PC-9 (cell line): ENCODE measurements at regions of chr12 and their contacts with region 1.

Region 1: GRCh38 chr12:67943226-67943892 is 45.9 kb upstream of the IFNG-AS1 start:
- DNase-seq: peak; percentile 50 to 52
- H3K4me3 ChIP-seq: no peak overlapping the region
- H3K27ac ChIP-seq: no peak overlapping the region
- H3K4me1 ChIP-seq: peaks cover 41% of the 10 kb centered on the region
- H3K27me3 ChIP-seq: no peaks in the 10 kb centered on the region
- CTCF ChIP-seq: peak; percentile 83

Region 2: DNA sequence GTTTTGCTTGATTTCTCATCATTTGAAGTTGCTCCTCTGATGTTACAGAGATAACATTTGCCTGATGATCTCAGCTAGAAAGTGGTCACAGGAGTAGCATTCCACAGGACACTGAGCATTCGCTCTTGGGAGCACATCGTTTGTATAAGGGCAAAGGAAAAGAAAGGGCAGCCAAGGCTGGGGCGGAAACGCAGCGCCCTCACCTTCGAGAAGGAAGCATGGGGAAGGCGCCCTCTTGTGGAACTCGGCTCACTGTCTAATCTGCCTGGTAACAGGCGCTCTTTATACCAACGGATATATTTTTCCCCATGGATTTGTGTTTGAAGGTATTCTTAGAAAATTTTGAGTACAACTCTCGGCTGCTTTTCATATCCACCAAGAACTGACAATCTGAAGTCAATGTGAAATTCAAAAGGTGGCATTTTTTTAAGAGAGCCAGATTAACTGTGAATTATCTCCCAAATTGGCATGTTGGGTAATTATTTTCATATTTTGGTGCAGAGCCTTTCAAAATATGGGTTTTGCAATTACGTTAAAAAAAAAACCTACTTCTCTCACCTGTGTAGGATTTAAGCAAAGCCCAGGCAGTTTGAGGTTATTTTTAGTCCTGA is 501.5 kb before region 1 on chr12:
- CTCF ChIA-PET with region 1: no interaction called
- POLR2A ChIA-PET with region 1: no interaction called
- intact Hi-C with region 1: loop called (anchors 5 kb)
- DNase-seq: peak in 1 of 2 experiments; percentile 77
- H3K4me3 ChIP-seq: no peak overlapping the region
- H3K27ac ChIP-seq: no peak overlapping the region
- H3K4me1 ChIP-seq: no peaks in the 10 kb centered on the region
- H3K27me3 ChIP-seq: no peaks in the 10 kb centered on the region
- CTCF ChIP-seq: peak; percentile 57

Region 3: GRCh38 chr12:67592216-67593011 is 350.9 kb before region 1 on chr12:
- CTCF ChIA-PET with region 1: no interaction called
- POLR2A ChIA-PET with region 1: interaction called, 14 read pairs
- intact Hi-C with region 1: no loop called
- DNase-seq: peak; percentile 29 to 61
- H3K4me3 ChIP-seq: peak overlapping the region; percentile 28; the same call in 1 of the 2 replicates
- H3K27ac ChIP-seq: peak overlapping the region; percentile 98
- H3K4me1 ChIP-seq: peaks cover 47% of the 10 kb centered on the region
- H3K27me3 ChIP-seq: no peaks in the 10 kb centered on the region
- CTCF ChIP-seq: no peak

Region 4: DNA sequence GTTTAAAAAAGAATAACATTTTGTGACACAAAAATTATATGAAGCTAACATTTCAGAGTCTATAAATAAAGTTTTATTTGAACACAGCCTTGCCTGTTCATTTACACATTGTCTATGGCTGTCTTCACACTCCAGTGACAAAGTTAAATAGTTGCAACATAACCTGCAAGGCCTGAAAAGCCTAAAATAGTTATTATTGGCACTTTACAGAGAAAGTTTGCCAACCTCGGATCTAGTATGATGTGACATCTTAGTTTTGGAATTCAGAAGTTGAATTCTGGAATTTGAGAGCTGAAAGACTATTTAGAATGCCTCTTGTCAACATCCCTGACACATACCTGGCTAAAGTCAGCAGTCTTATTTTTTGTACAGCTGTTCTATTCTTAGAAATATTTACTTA is 226.5 kb before region 1 on chr12:
- CTCF ChIA-PET with region 1: no interaction called
- POLR2A ChIA-PET with region 1: no interaction called
- intact Hi-C with region 1: loop called (anchors 1 kb)
- DNase-seq: peak; percentile 8 to 96
- H3K4me3 ChIP-seq: no peak overlapping the region
- H3K27ac ChIP-seq: peak overlapping the region; percentile 33; the same call in 1 of the 2 replicates
- H3K4me1 ChIP-seq: peaks cover 45% of the 10 kb centered on the region
- H3K27me3 ChIP-seq: no peaks in the 10 kb centered on the region
- CTCF ChIP-seq: no peak

Region 5: DNA sequence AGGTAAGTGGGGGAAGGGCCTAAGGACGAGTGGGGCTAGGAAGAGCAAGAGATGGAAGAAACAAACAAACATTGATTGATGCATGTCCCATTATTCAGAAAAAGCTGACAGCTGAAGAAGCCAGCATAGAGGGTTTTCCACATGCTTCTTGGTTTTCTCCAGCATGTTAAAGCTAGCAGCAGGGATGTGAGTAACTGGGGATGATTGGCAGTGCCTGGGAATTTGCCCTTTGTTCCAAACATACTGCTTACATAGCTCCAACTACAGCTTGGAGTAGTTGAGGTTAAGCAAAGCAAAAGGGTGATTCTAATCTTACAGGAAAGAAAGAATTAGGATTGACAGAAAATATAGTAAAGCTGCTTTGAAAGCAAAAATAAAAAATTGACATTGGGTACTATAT is 22.1 kb before region 1 on chr12:
- CTCF ChIA-PET with region 1: interaction called, 4 read pairs
- POLR2A ChIA-PET with region 1: interaction called, 5 read pairs
- intact Hi-C with region 1: loop called (anchors 1 kb)
- DNase-seq: no peak
- H3K4me3 ChIP-seq: no peak overlapping the region
- H3K27ac ChIP-seq: no peak overlapping the region
- H3K4me1 ChIP-seq: peaks cover 65% of the 10 kb centered on the region
- H3K27me3 ChIP-seq: no peaks in the 10 kb centered on the region
- CTCF ChIP-seq: no peak